MCF 10A (cell line): ENCODE measurements at regions of chr12 and their contacts with region 1.

Region 1: DNA sequence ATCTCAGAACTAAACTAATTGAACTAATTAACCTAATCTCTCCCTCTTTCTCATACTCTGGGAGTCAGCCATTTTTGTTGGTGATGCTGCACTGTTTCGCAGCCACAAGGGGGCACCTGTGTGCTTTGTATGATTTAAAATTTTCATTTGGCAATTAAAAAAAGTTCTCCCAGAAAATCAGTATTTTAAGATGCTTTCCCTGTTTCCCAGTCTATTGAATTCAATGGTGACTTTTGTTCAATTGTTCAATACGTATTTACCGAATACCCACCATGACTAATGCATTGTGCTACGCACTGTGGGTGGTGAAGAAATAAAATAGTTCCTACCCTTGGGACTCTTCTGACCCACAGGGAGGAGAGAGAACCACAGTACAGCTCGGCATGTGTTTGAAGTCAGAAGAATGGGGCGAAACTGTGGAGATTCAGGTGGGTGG is 63.7 kb downstream of the ZNF664 start:
- DNase-seq: peak; percentile 50
- H3K4me3 Mint-ChIP-seq: no peak overlapping the region
- H3K27ac Mint-ChIP-seq: no peak overlapping the region
- H3K4me1 Mint-ChIP-seq: no peaks in the 10 kb centered on the region
- H3K27me3 Mint-ChIP-seq: no peaks in the 10 kb centered on the region
- CTCF ChIP-seq: peak; percentile 81

Region 2: GRCh38 chr12:123468562-123469185 is 568.0 kb before region 1 on chr12:
- CTCF ChIA-PET with region 1: no interaction called
- POLR2A ChIA-PET with region 1: no interaction called
- intact Hi-C with region 1: no loop called
- DNase-seq: no peak
- H3K4me3 Mint-ChIP-seq: no peak overlapping the region
- H3K27ac Mint-ChIP-seq: no peak overlapping the region
- H3K4me1 Mint-ChIP-seq: no peaks in the 10 kb centered on the region
- H3K27me3 Mint-ChIP-seq: no peaks in the 10 kb centered on the region
- CTCF ChIP-seq: no peak

Region 3: DNA sequence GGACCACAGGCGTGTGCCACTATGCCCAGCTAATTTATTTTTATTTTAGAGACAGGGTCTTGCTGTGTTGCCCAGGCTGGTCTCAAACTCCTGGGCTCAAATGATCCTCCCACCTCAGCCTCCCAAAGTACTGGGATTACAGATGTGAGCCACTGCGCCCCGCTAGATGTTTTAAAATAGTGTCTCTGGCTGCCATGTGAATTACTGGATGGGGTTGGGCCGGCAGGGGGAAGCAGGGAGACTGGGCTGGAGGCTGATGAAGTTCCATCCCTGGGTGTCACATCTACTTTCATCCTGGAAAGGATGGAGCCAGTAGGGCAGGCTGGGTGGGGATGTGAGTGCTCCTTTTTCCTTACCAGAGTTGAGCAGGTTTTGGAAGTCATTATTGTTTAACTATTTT is 228.5 kb before region 1 on chr12:
- CTCF ChIA-PET with region 1: interaction called, 11 read pairs
- POLR2A ChIA-PET with region 1: no interaction called
- intact Hi-C with region 1: loop called (anchors 2 kb)
- DNase-seq: peak; percentile 28
- H3K4me3 Mint-ChIP-seq: no peak overlapping the region
- H3K27ac Mint-ChIP-seq: no peak overlapping the region
- H3K4me1 Mint-ChIP-seq: peaks cover 7% of the 10 kb centered on the region
- H3K27me3 Mint-ChIP-seq: peaks cover 32% of the 10 kb centered on the region
- CTCF ChIP-seq: peak; percentile 41

Region 4: GRCh38 chr12:124299628-124300388 is 263.1 kb after region 1 on chr12:
- CTCF ChIA-PET with region 1: interaction called, 10 read pairs
- POLR2A ChIA-PET with region 1: no interaction called
- intact Hi-C with region 1: no loop called
- DNase-seq: no peak
- H3K4me3 Mint-ChIP-seq: no peak overlapping the region
- H3K27ac Mint-ChIP-seq: no peak overlapping the region
- H3K4me1 Mint-ChIP-seq: no peaks in the 10 kb centered on the region
- H3K27me3 Mint-ChIP-seq: peaks cover 61% of the 10 kb centered on the region
- CTCF ChIP-seq: no peak

Region 5: GRCh38 chr12:124506145-124506831 is 469.6 kb after region 1 on chr12:
- CTCF ChIA-PET with region 1: no interaction called
- POLR2A ChIA-PET with region 1: no interaction called
- intact Hi-C with region 1: loop called (anchors 10 kb)
- DNase-seq: no peak
- H3K4me3 Mint-ChIP-seq: peak overlapping the region; percentile 44
- H3K27ac Mint-ChIP-seq: peak overlapping the region; percentile 67
- H3K4me1 Mint-ChIP-seq: peaks cover 69% of the 10 kb centered on the region
- H3K27me3 Mint-ChIP-seq: no peaks in the 10 kb centered on the region
- CTCF ChIP-seq: no peak

Region 6: DNA sequence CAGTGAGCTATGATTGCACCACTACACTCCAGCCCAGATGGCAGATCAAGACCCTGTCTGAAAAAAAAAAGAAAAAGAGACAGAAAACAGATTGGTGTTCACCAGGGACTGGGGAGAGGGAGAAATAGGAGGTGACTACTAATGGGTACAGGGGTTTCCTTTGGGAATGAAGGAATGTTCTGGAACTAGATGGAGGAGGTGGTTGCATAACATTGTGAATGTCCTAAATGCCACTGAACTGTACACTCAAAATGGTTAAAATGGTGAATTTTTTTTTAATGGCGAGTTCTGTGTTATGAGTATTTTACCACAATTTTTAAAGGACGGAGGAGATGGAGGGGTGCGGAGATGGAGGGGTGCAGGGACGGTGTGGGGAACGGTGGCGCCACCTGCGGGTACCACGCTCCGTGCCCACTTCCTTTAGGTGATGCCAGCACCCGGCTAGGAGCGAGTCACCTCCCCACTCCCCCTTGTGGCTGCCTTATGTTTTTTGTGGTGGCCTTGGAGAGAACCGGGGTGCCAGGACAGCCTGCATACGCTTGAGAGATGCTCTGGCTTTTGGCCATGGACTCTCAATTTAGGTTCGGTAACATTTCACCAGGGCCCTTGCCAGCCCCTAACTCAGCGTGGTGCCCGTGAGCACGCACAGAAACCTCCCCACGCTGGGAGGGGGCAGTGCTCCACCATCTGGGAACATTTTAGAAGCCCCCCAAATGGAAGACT is 861.7 kb after region 1 on chr12:
- CTCF ChIA-PET with region 1: interaction called, 3 read pairs
- POLR2A ChIA-PET with region 1: no interaction called
- intact Hi-C with region 1: loop called (anchors 5 kb)
- DNase-seq: peak; percentile 79
- H3K4me3 Mint-ChIP-seq: no peak overlapping the region
- H3K27ac Mint-ChIP-seq: no peak overlapping the region
- H3K4me1 Mint-ChIP-seq: peaks cover 6% of the 10 kb centered on the region
- H3K27me3 Mint-ChIP-seq: no peaks in the 10 kb centered on the region
- CTCF ChIP-seq: peak; percentile 54